Activated T-helper 2 cell treated with anti-CD3 and anti-CD28 coated beads, Interferon-gamma antibody, Interleukin-2, Interleukin-4, amounts not matched to agents 10 μg/mL and 5 μg/mL and 100 μg/mL, durations not matched to agents 14 hours and 24 hours and 36 hours (primary cell): ENCODE measurements at regions of chr4 and their contacts with region 1.

Region 1: GRCh38 chr4:9970392-9971013 is 50.8 kb downstream of the SLC2A9 start:
- DNase-seq: no peak
- H3K4me3 Mint-ChIP-seq: no peak overlapping the region
- H3K27ac Mint-ChIP-seq: peak overlapping the region; percentile 77
- H3K4me1 Mint-ChIP-seq: peaks cover 36% of the 10 kb centered on the region
- H3K27me3 Mint-ChIP-seq: no peaks in the 10 kb centered on the region

Region 2: DNA sequence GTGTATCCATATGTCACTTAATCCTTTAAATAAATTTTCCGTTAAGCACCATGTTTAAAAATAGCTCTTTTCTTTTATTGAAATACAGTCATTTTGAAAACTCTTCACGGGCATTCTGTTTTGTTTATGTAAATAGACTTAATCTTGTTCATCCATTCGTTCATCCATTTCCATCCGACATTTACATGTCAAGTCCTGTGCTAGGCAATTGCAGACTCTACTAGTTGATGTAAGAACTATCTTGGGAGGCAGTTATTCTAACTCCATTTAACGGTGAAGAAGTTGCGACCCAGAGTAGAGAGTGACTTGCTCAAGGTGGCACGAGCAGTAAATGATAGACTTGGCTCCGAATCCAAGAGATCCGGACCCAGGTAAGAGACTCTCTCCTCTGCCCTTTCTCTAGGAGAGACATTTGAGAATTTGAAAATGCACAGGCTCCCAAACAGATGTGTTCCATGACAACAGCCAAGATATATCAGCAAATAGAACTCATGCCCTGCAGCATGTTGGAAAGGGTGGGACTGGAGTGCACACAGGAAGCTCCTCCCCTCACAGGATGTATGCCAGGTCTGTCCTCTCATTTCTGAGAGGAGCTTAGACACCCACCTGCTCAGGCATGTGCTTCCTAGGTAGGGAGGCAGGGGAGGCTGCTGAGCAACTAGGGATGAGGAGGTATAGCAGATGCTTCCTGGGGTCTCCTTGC is 124.6 kb before region 1 on chr4:
- intact Hi-C with region 1: no loop called
- DNase-seq: no peak
- H3K4me3 Mint-ChIP-seq: no peak overlapping the region
- H3K27ac Mint-ChIP-seq: no peak overlapping the region
- H3K4me1 Mint-ChIP-seq: no peaks in the 10 kb centered on the region
- H3K27me3 Mint-ChIP-seq: peaks cover 1% of the 10 kb centered on the region

Region 3: GRCh38 chr4:9987749-9988362 is 17.4 kb after region 1 on chr4:
- intact Hi-C with region 1: no loop called
- DNase-seq: no peak
- H3K4me3 Mint-ChIP-seq: no peak overlapping the region
- H3K27ac Mint-ChIP-seq: no peak overlapping the region
- H3K4me1 Mint-ChIP-seq: no peaks in the 10 kb centered on the region
- H3K27me3 Mint-ChIP-seq: no peaks in the 10 kb centered on the region

Region 4: DNA sequence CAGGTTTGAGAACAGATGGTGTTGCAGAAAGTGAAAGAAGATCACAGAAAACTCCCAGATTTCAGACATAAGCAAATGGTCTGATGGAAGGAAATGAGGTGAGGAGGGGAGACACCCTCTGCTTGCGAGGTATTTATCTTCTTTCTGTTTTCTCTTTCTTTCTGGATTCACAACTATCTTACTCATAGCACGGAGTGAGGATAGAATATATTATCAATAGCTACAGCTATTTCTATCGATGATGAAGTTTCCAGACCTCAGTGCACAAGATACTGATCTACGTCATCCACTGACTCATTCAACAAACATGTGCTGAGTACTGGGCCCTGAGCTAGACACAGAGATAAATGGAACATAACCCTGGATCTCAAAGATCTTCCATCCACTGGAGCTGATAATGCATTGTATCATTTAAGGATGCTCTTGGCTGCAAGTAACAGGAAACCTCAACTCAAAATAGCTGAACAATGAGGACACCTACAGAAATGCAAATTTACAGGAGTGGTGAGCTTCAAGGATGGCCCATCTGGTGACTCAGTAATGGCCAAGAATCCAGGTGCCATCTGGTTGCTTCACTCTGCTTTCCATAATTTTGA is 29.6 kb after region 1 on chr4:
- intact Hi-C with region 1: loop called (anchors 1 kb)
- DNase-seq: no peak
- H3K4me3 Mint-ChIP-seq: no peak overlapping the region
- H3K27ac Mint-ChIP-seq: peak overlapping the region; percentile 58
- H3K4me1 Mint-ChIP-seq: peaks cover 58% of the 10 kb centered on the region
- H3K27me3 Mint-ChIP-seq: no peaks in the 10 kb centered on the region